ENCODE measurements at regions of chr4 and their contacts with region 1.

Region 1: GRCh38 chr4:144562019-144562705 is 83.8 kb upstream of the HHIP start:
- DNase-seq: no peak
- ATAC-seq: no peak
- H3K4me3 ChIP-seq: no peak overlapping the region
- H3K27ac ChIP-seq: no peak overlapping the region
- H3K4me1 ChIP-seq: peaks cover 9% of the 10 kb centered on the region
- H3K27me3 ChIP-seq: no peaks in the 10 kb centered on the region
- CTCF ChIP-seq: no peak

Region 2: GRCh38 chr4:144627663-144628076 is 65.5 kb after region 1 on chr4:
- CTCF ChIA-PET with region 1: no interaction called
- POLR2A ChIA-PET with region 1: no interaction called
- intact Hi-C with region 1: loop called (anchors 5 kb)
- DNase-seq: peak; percentile 80
- ATAC-seq: peak; percentile 92
- H3K4me3 ChIP-seq: no peak overlapping the region
- H3K27ac ChIP-seq: 0 out of 2 replicates have a peak overlapping the region, but pooled peaks have one; percentile 10
- H3K4me1 ChIP-seq: peaks cover 12% of the 10 kb centered on the region
- H3K27me3 ChIP-seq: no peaks in the 10 kb centered on the region
- CTCF ChIP-seq: no peak

Region 3: DNA sequence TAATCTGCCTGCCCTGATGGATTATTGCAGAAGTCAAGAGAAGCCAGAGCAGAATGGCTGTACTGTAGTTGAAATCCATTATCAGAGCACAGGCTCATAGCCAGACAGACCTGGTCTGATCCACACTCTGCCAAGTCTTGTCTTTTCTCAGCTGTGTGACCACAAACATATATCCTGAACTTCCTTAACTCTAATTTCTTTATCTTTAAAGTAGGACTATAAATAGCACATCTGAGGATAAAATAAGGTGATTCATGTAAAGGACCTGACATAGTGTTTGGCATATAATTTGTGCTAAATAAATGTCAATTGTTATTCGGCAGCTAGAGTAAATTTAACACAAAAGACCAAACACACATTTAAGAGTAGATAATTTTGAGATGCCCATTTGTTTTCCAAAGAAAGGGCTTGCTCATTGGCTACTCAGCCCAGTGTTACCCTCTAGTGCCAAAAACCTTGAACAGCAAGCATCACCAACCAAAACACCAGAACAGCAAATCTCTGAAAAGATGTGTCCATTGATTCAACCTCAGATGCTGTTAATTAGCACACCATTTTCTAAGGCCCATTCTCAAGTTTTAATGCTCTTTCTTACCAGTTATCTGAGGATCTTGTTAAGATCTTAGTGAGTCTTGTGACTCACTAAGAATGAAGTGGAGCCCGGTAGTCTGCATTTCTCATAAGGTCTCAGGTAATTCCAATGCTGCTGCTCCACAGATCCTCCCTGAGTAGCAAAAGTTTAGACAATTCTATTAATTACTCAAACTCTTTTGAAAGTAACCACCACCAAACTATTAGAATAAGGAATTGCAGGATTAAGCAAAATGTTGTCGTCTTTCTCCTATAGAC is 192.6 kb after region 1 on chr4:
- CTCF ChIA-PET with region 1: no interaction called
- POLR2A ChIA-PET with region 1: no interaction called
- intact Hi-C with region 1: loop called (anchors 1 kb)
- DNase-seq: peak; percentile 50
- ATAC-seq: peak; percentile 72
- H3K4me3 ChIP-seq: no peak overlapping the region
- H3K27ac ChIP-seq: no peak overlapping the region
- H3K4me1 ChIP-seq: 0 out of 2 replicates have a peak, but pooled peaks cover 7% of the 10 kb centered on the region
- H3K27me3 ChIP-seq: no peaks in the 10 kb centered on the region
- CTCF ChIP-seq: peak; percentile 83

Region 4: DNA sequence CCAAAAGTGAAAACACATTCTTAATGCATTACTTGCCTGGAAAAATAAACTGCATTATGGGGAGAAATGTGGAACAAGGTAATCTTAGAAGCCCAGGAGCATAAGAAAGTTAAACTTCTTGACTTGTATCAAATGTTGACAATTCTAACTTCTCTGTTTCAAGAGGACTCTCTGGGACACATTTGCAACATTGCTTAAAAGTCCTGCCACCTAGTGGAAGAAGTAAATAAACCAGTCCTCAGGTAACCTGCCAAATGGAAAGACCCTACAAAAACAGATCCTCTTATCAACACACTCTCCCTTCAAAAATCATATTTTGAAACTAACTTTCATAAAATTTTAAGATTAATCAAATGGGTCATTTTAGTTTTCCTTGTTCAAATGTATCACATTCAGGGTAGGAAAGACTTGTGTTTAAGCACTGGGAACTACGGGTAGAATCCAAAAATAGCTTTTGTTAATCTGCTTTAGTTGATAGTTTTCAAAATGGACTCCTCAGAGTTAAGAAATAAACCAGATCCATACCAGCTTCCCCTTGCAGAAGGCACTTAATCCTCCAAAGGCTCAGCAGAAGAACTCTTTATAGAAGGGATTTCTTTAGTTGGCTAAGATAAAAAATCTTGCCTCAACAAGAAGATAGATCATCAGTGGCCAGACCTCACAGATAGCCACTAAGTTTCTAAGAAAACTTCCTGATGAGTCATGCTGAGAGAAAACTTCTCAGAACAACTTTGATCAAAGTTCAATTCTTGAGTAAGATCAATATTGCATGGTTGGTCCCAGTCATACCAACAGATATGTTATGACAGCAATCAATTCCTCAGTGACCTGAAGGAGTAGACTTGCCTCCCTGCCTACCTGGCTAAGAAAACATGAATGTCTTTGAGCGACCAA is 225.4 kb after region 1 on chr4:
- CTCF ChIA-PET with region 1: no interaction called
- POLR2A ChIA-PET with region 1: no interaction called
- intact Hi-C with region 1: loop called (anchors 1 kb)
- DNase-seq: peak; percentile 62
- ATAC-seq: peak; percentile 49; the same call in 1 of the 2 replicates
- H3K4me3 ChIP-seq: no peak overlapping the region
- H3K27ac ChIP-seq: no peak overlapping the region
- H3K4me1 ChIP-seq: peaks cover 2% of the 10 kb centered on the region; the same call in 1 of the 2 replicates
- H3K27me3 ChIP-seq: no peaks in the 10 kb centered on the region
- CTCF ChIP-seq: peak; percentile 87